PC-9 (cell line): ENCODE measurements at regions of chr15 and their contacts with region 1.

Region 1: GRCh38 chr15:59138243-59138642 is 33.3 kb downstream of the CCNB2 start:
- DNase-seq: peak in 1 of 2 experiments; percentile 34
- H3K4me3 ChIP-seq: no peak overlapping the region
- H3K27ac ChIP-seq: no peak overlapping the region
- H3K4me1 ChIP-seq: no peaks in the 10 kb centered on the region
- H3K27me3 ChIP-seq: no peaks in the 10 kb centered on the region
- CTCF ChIP-seq: peak; percentile 56; the same call in 1 of the 2 replicates

Region 2: GRCh38 chr15:58212909-58213526 is 925.2 kb before region 1 on chr15:
- CTCF ChIA-PET with region 1: no interaction called
- POLR2A ChIA-PET with region 1: no interaction called
- intact Hi-C with region 1: loop called (anchors 10 kb)
- DNase-seq: no peak
- H3K4me3 ChIP-seq: no peak overlapping the region
- H3K27ac ChIP-seq: no peak overlapping the region
- H3K4me1 ChIP-seq: no peaks in the 10 kb centered on the region
- H3K27me3 ChIP-seq: no peaks in the 10 kb centered on the region
- CTCF ChIP-seq: peak; percentile 67

Region 3: DNA sequence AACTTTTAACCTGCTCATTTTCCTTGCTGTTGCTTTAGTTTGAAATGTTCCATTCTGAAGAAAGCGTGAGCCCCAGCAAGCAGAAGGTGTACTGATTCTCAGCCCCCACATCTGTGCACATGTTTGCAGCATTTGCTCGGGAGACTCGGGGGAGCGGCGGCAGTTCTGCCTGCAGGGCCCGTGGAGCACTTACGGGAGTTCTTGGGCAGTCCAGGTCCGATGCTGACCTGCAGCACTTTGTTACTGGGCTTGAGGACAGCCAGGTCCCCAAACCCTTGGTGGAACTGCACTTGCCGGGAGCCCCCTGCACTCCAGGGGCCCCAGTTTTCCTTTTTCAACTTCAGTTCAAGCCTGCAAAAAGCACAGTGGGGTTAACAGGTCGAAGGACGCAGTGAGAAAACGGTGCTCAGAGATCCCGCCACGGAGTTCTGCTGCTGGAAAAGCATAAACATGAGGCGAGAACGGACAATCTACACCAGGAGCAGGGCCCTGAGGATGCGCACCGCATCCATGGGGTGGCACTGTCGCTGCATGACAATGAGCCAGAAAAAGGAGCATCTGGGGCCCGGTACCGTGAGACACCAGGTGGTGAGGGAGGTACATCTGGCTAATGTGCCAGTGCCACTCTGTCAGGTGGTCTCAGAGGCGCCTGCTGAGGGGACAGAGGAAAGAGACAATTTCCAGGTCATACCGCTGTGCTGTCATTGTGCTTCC is 22.8 kb after region 1 on chr15:
- CTCF ChIA-PET with region 1: no interaction called
- POLR2A ChIA-PET with region 1: no interaction called
- intact Hi-C with region 1: no loop called
- DNase-seq: peak in 1 of 2 experiments; percentile 29
- H3K4me3 ChIP-seq: no peak overlapping the region
- H3K27ac ChIP-seq: no peak overlapping the region
- H3K4me1 ChIP-seq: no peaks in the 10 kb centered on the region
- H3K27me3 ChIP-seq: no peaks in the 10 kb centered on the region
- CTCF ChIP-seq: peak; percentile 41